ENCODE measurements at regions of chr3 and their contacts with region 1.

Region 1: GRCh38 chr3:4772171-4772804 is 206.9 kb upstream of the BHLHE40 start:
- DNase-seq: peak; percentile 93
- H3K4me3 ChIP-seq: no peak overlapping the region
- H3K27ac ChIP-seq: peak overlapping the region; percentile 63 to 83 (median 74)
- H3K4me1 ChIP-seq: peaks cover 0 to 37% (median 27%) of the 10 kb centered on the region in 4 donors
- H3K27me3 ChIP-seq: no peaks in the 10 kb centered on the region
- CTCF ChIP-seq: no peak
- EP300 ChIP-seq: no peak
- POLR2A ChIP-seq: no peak

Region 2: DNA sequence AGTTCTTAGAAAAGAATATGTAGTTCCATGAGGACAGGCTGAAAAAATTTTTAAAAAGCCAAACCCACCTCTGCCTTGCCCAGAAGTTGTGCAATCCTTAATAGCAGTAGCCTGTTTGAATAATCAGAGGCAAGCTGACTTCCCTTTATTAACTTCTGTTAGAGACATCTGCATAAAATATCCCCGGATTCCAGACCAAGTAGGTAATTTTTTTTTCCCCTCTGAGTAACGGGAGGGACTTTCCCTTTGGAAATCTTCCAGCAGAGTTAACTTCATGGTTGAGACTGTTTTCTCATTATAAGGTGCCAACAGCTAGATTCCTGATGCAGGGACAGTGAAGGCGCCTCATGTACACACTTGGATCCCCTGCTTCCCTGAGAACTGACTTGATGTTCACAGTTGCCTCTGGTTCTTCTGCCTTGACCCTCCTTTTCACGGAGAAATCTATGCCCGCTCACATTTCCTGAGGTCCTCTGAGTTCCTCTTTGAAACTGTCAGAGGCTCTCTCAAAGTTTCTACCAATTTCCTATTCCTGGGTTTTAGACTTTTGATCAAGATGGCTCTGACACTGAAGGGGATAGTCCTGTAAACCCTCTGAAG is 20.7 kb before region 1 on chr3:
- intact Hi-C with region 1: loop called (anchors 2 kb)
- DNase-seq: no peak
- H3K4me3 ChIP-seq: no peak overlapping the region
- H3K27ac ChIP-seq: peak overlapping the region; percentile 68 to 88 (median 84)
- H3K4me1 ChIP-seq: peaks cover 0 to 51% (median 41%) of the 10 kb centered on the region in 4 donors
- H3K27me3 ChIP-seq: no peaks in the 10 kb centered on the region
- CTCF ChIP-seq: no peak
- EP300 ChIP-seq: no peak
- POLR2A ChIP-seq: no peak

Measured in sigmoid colon (tissue), 7 donors.